ENCODE measurements at regions of chr6 and their contacts with region 1.

Region 1: DNA sequence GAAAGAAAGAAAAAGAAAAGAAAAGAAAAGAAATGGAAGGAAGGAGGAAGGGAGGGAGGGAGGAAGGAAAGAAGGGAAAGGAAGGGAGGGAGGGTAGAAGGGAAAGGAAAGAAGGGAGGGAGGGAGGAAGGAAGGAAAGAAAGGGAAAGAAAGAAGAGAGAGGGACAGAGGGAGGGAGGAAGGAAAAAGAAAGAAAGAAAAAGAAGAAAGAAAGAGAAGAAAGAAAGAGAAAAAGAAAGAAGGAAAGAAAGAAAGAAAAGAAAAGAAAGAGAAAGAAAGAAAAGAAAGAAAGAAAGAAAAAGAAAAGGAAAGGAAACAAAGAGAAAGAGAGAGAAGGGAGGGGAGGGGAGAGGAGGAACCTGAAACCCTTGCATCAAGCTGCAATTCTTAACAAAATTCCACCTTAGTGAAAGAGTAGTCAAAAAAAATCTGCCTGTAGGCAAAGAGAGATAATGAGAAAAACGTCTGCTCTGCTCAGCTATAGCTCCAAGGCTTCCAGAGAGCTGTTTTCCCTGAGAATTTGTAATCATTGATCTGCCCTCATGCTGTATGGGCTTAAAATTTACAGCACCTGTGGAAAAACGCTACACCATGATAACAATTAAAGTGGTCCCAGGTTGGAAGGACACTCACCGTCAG is 16.7 kb upstream of the MYCT1 start:
- DNase-seq: no peak
- H3K4me3 ChIP-seq: peak overlapping the region; percentile 70
- H3K27ac ChIP-seq: peak overlapping the region; percentile 96
- H3K4me1 ChIP-seq: peaks cover 66% of the 10 kb centered on the region
- CTCF ChIP-seq: no peak

Region 2: GRCh38 chr6:152094992-152095592 is 585.9 kb before region 1 on chr6:
- CTCF ChIA-PET with region 1: no interaction called
- POLR2A ChIA-PET with region 1: no interaction called
- intact Hi-C with region 1: no loop called
- DNase-seq: no peak
- H3K4me3 ChIP-seq: no peak overlapping the region
- H3K27ac ChIP-seq: no peak overlapping the region
- H3K4me1 ChIP-seq: no peaks in the 10 kb centered on the region
- CTCF ChIP-seq: no peak

Region 3: DNA sequence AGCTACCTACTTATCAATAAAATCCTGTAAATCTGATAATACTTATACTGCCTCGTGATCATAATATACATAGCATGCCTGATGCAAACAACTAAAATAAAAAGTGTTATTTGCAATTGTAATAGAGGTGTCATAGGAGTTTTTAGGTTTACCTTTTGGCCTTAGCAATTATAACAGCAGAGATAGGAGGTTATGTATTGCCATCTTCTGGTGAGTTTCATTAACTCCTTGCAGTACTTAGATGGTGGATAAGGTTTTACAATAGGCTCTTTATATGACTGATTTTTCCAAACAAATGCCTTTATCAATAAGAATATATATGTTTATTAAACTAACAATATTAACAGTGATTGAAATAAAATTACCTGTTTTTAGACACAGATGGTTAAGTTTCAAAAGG is 11.1 kb before region 1 on chr6:
- CTCF ChIA-PET with region 1: no interaction called
- POLR2A ChIA-PET with region 1: interaction called, 15 read pairs
- intact Hi-C with region 1: no loop called
- DNase-seq: peak; percentile 53
- H3K4me3 ChIP-seq: no peak overlapping the region
- H3K27ac ChIP-seq: no peak overlapping the region
- H3K4me1 ChIP-seq: peaks cover 14% of the 10 kb centered on the region
- CTCF ChIP-seq: peak; percentile 82

Region 4: GRCh38 chr6:153002607-153003365 is 321.8 kb after region 1 on chr6 and contains the start of gene MTRF1L:
- CTCF ChIA-PET with region 1: no interaction called
- POLR2A ChIA-PET with region 1: interaction called, 5 read pairs
- intact Hi-C with region 1: loop called (anchors 5 kb)
- DNase-seq: peak; percentile 96
- H3K4me3 ChIP-seq: peak within 1 kb of the TSS; percentile 75
- H3K27ac ChIP-seq: peak within 1 kb of the TSS; percentile 57
- H3K4me1 ChIP-seq: peaks cover 22% of the 10 kb centered on the region
- CTCF ChIP-seq: no peak
- total RNA-seq, gene MTRF1L: 10.4 and 11.0 TPM in 2 replicates